AG04450 (cell line): ENCODE measurements at regions of chr6 and their contacts with region 1.

Region 1: DNA sequence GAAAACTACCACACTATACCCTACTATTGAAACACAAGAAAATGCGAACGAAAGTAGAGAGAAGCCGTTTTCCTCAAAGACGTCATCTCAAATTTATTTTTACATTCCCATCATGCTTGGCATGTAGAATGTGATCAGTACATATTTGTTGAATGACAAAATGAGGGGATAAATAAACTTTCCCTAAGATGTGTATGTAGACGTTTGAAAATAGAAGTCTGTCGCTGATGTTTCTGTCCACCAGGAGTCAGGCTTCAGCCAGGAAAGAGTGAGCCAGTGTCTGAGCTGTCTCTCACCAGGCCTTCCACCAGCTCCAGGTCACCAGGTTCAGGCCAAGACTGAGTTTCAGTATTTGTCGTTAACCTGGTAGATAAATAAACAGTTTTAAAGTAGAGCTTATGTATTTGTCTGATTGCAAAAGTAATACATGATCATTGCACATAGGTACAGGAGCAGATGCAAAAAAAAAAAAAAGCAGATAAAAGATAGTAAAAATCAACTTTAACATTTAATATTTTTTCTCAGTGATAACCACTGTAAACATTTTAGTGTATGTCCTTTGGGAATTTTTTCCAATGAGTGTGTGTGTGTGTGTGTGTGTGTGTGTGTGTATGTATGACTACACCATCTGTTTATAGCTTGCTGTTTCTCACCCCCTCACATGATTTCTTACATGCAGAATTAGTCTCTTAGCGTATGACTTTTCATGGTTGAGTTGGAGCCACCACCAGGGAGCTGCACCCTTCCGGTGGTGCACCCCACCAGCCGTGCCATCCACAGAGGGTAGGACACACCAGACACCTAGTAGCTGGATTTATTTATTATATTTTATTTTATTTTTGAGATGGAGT is 26.2 kb downstream of the WRNIP1 start:
- DNase-seq: peak; percentile 84
- H3K4me3 ChIP-seq: peak overlapping the region; percentile 21
- H3K27ac ChIP-seq: peak overlapping the region; percentile 98
- H3K27me3 ChIP-seq: no peaks in the 10 kb centered on the region
- CTCF ChIP-seq: peak; percentile 88

Region 2: DNA sequence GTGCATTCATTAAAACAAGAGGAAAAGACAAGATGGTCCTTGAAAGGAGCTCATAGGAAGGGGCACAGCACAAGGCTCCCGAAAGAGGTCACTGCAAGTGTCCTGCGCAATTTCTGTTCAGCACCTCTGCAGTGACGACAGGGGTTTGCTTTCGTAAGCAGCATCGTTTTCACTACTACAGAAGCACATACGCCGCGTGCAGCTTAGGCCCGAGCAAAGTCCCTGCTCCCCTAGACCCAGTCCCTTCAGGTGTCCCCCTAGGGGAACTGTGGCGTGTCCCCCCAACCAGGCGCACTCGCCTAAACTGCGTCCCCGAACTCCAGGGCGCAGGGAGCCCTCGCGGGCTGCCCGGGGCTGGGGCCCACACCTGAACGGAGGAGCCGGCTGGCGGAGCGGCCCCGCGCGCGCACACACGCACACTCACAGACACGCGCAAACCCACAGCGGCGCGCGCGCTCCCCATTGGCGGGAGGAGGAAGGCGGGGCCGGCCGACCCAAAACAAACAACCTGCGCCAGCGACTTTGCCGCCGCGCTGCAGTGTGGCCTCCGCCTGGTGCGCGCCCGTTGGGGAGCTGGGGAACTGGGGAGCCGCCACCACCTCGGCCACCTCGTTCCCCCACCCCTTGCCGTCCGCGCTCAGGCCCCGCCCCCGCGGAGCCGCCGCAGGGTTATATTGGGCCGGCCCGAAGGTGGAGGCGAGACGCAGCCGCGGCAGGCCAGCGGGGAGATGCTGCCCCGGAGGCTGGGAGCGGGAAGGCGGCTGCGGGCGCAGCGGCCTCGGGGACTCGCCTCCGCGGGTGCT is 1479.7 kb before region 1 on chr6 and contains the start of gene FOXQ1:
- CTCF ChIA-PET with region 1: no interaction called
- POLR2A ChIA-PET with region 1: no interaction called
- DNase-seq: no peak
- H3K4me3 ChIP-seq: peak within 1 kb of the TSS; percentile 50
- H3K27ac ChIP-seq: no peak within 1 kb of the TSS
- H3K27me3 ChIP-seq: peaks cover 71% of the 10 kb centered on the region
- CTCF ChIP-seq: no peak
- polyA plus RNA-seq, gene FOXQ1: 0.07 TPM in 1 of 2 replicates, not detected in the other

Region 3: DNA sequence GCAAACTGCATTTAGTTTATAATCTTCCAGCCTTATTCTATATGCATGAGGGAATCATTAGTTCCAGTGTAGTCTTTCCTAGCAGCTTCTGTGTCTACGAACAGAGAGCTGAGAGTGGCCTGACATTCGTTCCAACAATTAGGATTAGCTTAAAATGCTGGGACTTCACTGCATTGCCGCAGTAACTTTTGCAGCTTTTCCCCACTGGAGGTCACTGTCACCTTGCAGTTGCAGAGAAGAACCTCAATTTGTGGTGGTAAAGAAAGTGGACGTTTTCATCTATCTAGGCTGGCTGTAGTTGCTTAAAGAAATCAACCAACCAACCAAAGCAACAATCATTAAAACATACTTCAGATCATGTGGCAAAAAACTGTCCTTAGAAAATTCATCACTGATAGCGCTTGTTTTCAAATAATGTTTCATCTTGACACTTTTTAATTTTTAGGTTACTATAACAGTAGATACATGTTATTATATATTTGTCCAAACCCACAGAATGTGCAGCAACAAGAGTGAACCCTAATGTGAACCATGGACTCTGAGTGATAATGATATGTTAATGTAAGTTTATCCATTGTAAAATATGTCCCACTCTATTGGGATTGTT is 52.9 kb before region 1 on chr6:
- CTCF ChIA-PET with region 1: interaction called, 21 read pairs
- POLR2A ChIA-PET with region 1: no interaction called
- DNase-seq: peak; percentile 45
- H3K4me3 ChIP-seq: no peak overlapping the region
- H3K27ac ChIP-seq: no peak overlapping the region
- H3K27me3 ChIP-seq: no peaks in the 10 kb centered on the region
- CTCF ChIP-seq: peak; percentile 83

Region 4: GRCh38 chr6:2765166-2765895 is 26.0 kb before region 1 on chr6 and contains the start of gene WRNIP1:
- CTCF ChIA-PET with region 1: interaction called, 27 read pairs
- POLR2A ChIA-PET with region 1: interaction called, 7 read pairs
- DNase-seq: peak; percentile 98
- H3K4me3 ChIP-seq: peak within 1 kb of the TSS; percentile 91
- H3K27ac ChIP-seq: peak within 1 kb of the TSS; percentile 92
- H3K27me3 ChIP-seq: no peaks in the 10 kb centered on the region
- CTCF ChIP-seq: peak; percentile 50
- polyA plus RNA-seq, gene WRNIP1: 28.0 and 35.2 TPM in 2 replicates

Region 5: GRCh38 chr6:2841264-2842138 is 50.2 kb after region 1 on chr6 and contains the start of gene SERPINB1:
- CTCF ChIA-PET with region 1: interaction called, 50 read pairs
- POLR2A ChIA-PET with region 1: interaction called, 26 read pairs
- DNase-seq: peak; percentile 91
- H3K4me3 ChIP-seq: peak within 1 kb of the TSS; percentile 60
- H3K27ac ChIP-seq: peak within 1 kb of the TSS; percentile 93
- H3K27me3 ChIP-seq: no peaks in the 10 kb centered on the region
- CTCF ChIP-seq: peak; percentile 20; the same call in 1 of the 2 replicates
- polyA plus RNA-seq, gene SERPINB1: 17.7 and 22.4 TPM in 2 replicates

Region 6: GRCh38 chr6:2848851-2849250 is 57.5 kb after region 1 on chr6:
- CTCF ChIA-PET with region 1: interaction called, 50 read pairs
- POLR2A ChIA-PET with region 1: interaction called, 10 read pairs
- DNase-seq: no peak
- H3K4me3 ChIP-seq: no peak overlapping the region
- H3K27ac ChIP-seq: no peak overlapping the region
- H3K27me3 ChIP-seq: no peaks in the 10 kb centered on the region
- CTCF ChIP-seq: no peak

Region 7: DNA sequence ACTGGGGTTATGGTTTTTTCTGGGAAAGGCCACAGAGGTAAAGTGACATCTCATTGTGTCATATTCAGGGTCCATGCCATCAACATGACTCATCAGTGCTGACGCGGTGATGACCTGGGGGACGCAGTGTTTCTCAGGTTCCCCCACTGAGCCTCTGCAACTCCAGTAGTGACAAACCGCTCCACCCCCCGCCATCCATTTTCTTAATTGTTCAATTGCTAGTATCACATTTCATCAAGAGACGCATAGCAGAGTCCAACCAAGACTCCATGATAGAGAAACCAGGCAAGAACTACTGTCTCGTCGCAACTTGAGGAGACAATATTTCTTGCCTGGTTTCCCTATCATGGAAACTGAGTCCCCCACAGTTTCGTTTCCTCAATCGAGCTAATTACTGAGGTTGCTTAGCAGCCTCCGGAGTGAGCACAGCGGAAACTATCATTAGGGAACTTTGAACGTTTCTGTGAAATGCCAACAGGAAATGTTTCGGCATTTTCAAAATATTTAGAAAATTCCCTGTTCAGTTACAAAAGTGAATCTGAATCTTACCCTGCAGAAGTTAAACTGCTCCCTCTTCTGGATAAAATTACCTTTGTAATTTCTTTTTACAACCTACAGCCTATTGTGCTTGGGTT is 62.5 kb after region 1 on chr6:
- CTCF ChIA-PET with region 1: interaction called, 19 read pairs
- POLR2A ChIA-PET with region 1: no interaction called
- DNase-seq: no peak
- H3K4me3 ChIP-seq: peak overlapping the region; percentile 57
- H3K27ac ChIP-seq: peak overlapping the region; percentile 96
- H3K27me3 ChIP-seq: no peaks in the 10 kb centered on the region
- CTCF ChIP-seq: peak; percentile 58

Region 8: GRCh38 chr6:2931970-2932748 is 140.8 kb after region 1 on chr6:
- CTCF ChIA-PET with region 1: interaction called, 42 read pairs
- POLR2A ChIA-PET with region 1: no interaction called
- DNase-seq: peak; percentile 4
- H3K4me3 ChIP-seq: no peak overlapping the region
- H3K27ac ChIP-seq: no peak overlapping the region
- H3K27me3 ChIP-seq: peaks cover 7% of the 10 kb centered on the region
- CTCF ChIP-seq: peak; percentile 99